ENCODE measurements at regions of chr7 and their contacts with region 1.

Region 1: GRCh38 chr7:135281363-135281949 is 47.8 kb downstream of the STRA8 start:
- DNase-seq: peak; percentile 90
- H3K4me3 Mint-ChIP-seq: no peak overlapping the region
- H3K27ac Mint-ChIP-seq: no peak overlapping the region
- H3K4me1 Mint-ChIP-seq: peaks cover 11% of the 10 kb centered on the region
- H3K27me3 Mint-ChIP-seq: peaks cover 19% of the 10 kb centered on the region
- CTCF ChIP-seq: peak; percentile 98

Region 2: DNA sequence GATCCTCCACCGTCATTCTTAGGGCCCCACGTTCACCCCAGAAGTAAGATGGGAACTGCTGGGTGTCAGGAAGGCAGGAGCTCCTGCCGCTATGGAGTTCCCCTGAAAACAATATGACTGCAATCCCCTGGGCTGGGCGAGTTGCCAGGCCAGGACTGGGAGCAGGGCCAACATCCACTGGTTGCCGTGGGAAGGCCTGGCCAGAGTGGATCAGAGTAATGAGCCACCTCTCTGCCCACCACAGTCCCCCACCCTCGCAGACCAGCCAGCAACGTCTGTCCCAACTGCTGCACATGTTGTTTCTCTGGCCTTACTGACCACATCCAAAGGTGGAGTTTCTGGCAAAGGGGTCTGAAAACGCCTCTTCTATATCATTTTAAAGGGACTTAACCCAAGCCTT is 38.8 kb after region 1 on chr7:
- CTCF ChIA-PET with region 1: interaction called, 18 read pairs
- POLR2A ChIA-PET with region 1: interaction called, 3 read pairs
- intact Hi-C with region 1: no loop called
- DNase-seq: peak; percentile 92
- H3K4me3 Mint-ChIP-seq: no peak overlapping the region
- H3K27ac Mint-ChIP-seq: no peak overlapping the region
- H3K4me1 Mint-ChIP-seq: peaks cover 14% of the 10 kb centered on the region
- H3K27me3 Mint-ChIP-seq: no peaks in the 10 kb centered on the region
- CTCF ChIP-seq: no peak

Region 3: GRCh38 chr7:135342887-135343286 is 61.4 kb after region 1 on chr7:
- CTCF ChIA-PET with region 1: interaction called, 41 read pairs
- POLR2A ChIA-PET with region 1: no interaction called
- intact Hi-C with region 1: no loop called
- DNase-seq: no peak
- H3K4me3 Mint-ChIP-seq: no peak overlapping the region
- H3K27ac Mint-ChIP-seq: no peak overlapping the region
- H3K4me1 Mint-ChIP-seq: no peaks in the 10 kb centered on the region
- H3K27me3 Mint-ChIP-seq: no peaks in the 10 kb centered on the region
- CTCF ChIP-seq: no peak

Region 4: DNA sequence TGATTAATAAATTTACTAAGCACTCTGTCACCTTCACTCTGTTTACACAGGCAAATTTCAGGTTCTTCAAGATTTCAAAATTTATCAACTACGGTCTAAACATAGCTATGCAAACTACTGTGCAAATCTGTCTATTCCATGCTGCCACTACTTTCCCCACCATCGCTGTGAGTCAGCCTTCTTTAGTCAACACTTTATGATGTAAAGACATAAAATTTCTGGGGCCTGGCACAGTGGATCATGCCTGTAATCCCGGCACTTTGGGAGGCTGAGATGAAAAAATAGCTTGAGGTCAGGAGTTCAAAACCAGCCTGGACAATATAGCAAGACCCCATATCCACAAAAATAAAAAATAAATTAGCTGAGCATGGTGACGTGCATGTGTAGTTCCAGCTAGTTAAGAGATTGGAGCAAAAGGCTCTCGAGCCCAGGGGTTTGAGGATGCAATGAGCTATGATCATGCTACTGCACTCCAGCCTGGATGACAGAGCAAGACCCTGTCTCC is 185.8 kb after region 1 on chr7:
- CTCF ChIA-PET with region 1: no interaction called
- POLR2A ChIA-PET with region 1: no interaction called
- intact Hi-C with region 1: no loop called
- DNase-seq: peak; percentile 15
- H3K4me3 Mint-ChIP-seq: no peak overlapping the region
- H3K27ac Mint-ChIP-seq: no peak overlapping the region
- H3K4me1 Mint-ChIP-seq: no peaks in the 10 kb centered on the region
- H3K27me3 Mint-ChIP-seq: no peaks in the 10 kb centered on the region
- CTCF ChIP-seq: no peak

Region 5: DNA sequence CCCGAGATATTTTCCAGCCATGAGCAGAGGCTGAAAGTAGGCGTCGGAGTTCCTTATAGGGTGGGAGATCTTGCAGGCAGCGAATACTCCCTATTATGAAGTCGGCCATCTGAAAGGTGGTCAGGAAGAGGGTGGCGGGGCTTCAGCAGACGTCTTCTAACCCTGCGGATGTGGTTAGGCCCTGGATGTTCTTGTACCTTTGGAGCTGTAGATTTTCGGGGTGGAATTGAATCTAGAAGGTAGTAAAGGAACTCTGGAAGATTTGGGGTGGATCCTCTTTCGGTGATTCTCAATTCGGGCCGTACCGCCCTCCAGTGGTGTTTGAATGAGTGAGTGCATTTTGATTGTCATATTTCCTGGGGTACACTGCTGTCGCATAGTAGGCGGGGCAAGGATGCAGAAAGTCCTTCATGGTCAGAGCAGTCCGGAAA is 276.9 kb after region 1 on chr7:
- CTCF ChIA-PET with region 1: interaction called, 9 read pairs
- POLR2A ChIA-PET with region 1: interaction called, 6 read pairs
- intact Hi-C with region 1: loop called (anchors 1 kb)
- DNase-seq: peak; percentile 85
- H3K4me3 Mint-ChIP-seq: no peak overlapping the region
- H3K27ac Mint-ChIP-seq: no peak overlapping the region
- H3K4me1 Mint-ChIP-seq: peaks cover 9% of the 10 kb centered on the region
- H3K27me3 Mint-ChIP-seq: no peaks in the 10 kb centered on the region
- CTCF ChIP-seq: peak; percentile 41

Measured in MCF 10A (cell line).